Sciatic nerve (tissue), 2 donors: ENCODE measurements at regions of chr1 and their contacts with region 1.

Region 1: DNA sequence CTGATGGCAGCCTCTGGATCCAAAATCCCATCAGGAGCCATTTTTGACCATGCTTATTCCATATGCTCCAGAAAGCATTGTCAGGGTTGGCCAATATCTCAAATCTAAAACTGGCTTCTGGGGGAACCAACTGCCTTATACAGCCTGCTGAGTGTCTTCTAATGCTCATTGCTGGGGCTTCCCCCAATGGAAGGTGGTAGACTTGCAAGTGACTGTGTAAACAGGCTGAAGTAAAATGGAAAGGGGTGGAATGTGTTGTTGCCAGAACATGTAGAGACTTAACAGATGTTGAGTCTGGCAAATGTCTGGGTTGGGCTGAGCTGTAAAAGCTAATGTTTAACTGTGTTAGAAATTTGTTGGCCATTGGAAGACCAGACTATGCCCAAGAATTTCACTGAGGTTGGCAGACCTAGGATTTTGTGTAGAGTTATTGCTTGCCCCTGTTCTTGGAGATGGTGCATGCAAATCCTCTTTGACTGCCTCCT is 22.7 kb upstream of the LRIF1 start:
- DNase-seq: no peak
- ATAC-seq: no peak

Region 2: GRCh38 chr1:110928904-110929303 is 57.5 kb before region 1 on chr1:
- intact Hi-C with region 1: loop called (anchors 2 kb)
- DNase-seq: no peak
- ATAC-seq: no peak